Colonic mucosa (tissue), 4 donors: ENCODE measurements at regions of chr3 and their contacts with region 1.

Region 1: DNA sequence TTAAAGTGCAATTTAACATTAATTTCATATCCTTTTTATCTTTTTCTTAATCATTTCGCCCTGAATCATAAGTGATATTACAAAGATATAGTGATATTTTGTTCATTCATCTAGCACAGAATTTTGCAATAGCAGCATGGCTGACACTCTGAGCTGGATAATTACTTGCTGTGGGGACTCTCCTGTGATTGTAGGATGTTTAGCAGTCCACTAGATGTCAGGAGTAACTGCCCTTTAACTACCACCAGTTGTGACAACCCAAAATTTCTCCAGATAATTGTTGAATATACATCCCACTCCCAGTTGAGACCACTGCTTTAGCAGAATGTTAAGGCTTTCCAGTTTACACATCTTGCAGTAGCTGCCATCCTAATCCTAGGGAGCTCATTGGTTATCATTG is 196.8 kb upstream of the MBNL1 start:
- DNase-seq: no peak
- H3K4me3 ChIP-seq: no peak overlapping the region
- H3K27ac ChIP-seq: no peak overlapping the region
- H3K4me1 ChIP-seq: no peaks in the 10 kb centered on the region
- H3K27me3 ChIP-seq: no peaks in the 10 kb centered on the region
- CTCF ChIP-seq: peak; percentile 33

Region 2: DNA sequence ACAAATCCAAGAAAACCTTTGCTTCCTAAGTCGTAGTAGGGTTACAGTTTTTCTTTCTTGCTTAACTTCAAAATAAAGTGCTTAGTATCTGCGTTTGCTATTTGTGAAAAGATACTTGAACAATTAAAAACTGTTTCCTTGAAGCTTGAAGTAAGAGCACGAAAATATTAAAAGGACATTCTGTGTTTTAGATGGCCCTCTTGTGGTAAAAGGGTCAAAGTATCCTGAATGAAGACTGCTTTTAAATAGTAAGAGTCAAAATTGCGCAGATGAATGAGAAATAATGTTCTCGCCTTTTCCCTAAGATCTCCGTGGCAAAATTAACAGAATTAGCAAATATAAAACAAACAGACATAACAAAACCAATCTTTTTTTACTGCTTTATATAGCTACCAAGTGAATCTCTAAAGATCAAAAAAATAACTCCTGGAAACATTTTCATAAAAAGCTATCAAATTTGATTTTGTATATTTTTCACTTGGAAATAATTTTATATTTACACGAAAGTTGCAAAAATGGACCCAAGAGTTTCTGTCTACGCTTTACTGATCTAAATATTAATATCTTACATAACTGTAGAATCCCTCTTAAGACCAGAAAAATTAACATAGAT is 372.2 kb after region 1 on chr3:
- intact Hi-C with region 1: loop called (anchors 5 kb)
- DNase-seq: no peak
- H3K4me3 ChIP-seq: no peak overlapping the region
- H3K27ac ChIP-seq: no peak overlapping the region
- H3K4me1 ChIP-seq: no peaks in the 10 kb centered on the region
- H3K27me3 ChIP-seq: no peaks in the 10 kb centered on the region
- CTCF ChIP-seq: peak; percentile 58